ENCODE measurements at regions of chr9 and their contacts with region 1.

Region 1: DNA sequence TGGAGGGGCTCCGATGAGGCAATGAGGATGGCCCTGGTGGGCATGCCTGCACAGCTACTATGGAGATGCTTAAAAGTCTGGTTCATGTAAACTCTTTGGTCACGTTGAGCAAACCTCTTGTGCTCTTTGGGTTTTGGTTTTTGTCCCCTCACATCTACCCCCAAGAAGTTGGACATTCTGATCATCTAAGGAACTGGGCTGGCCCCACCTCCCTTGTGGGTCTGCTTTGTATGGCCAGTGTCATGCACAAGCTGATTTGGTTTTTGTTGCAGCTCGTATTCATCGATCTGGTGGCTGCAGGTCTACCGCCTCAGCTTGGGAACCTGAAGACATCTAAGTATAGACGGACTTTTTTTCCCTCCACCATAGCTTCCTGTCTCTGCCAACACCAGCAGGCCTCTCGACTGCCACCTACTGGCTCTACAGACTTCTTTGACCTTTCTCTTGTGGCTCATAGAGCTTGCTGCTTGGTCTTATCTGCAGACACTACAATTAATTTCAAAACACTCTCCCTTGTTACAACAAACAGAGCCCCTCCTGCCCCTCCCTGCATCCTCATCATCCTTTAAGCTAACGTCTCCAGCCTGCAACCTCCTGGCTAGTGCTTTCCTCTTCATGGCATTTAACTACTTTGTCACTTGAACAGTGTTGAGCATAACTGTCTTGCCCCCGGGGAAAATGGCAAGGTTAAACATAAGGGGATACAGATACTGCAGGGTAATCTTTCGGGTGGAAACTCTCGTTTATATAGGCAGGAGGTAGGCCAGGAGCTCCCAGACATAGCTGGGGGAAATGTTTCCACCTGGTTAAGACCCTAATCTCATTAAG is 34.5 kb downstream of the TSTD2 start:
- DNase-seq: peak; percentile 80 to 82
- H3K4me3 ChIP-seq: no peak overlapping the region
- H3K4me3 Mint-ChIP-seq: no peak overlapping the region
- H3K27ac Mint-ChIP-seq: no peak overlapping the region
- H3K4me1 ChIP-seq: 0 out of 2 replicates have a peak, but pooled peaks cover 3% of the 10 kb centered on the region
- H3K4me1 Mint-ChIP-seq: peaks cover 8% of the 10 kb centered on the region
- H3K27me3 ChIP-seq: no peaks in the 10 kb centered on the region
- H3K27me3 Mint-ChIP-seq: no peaks in the 10 kb centered on the region
- CTCF ChIP-seq: peak; percentile 83 to 93

Region 2: DNA sequence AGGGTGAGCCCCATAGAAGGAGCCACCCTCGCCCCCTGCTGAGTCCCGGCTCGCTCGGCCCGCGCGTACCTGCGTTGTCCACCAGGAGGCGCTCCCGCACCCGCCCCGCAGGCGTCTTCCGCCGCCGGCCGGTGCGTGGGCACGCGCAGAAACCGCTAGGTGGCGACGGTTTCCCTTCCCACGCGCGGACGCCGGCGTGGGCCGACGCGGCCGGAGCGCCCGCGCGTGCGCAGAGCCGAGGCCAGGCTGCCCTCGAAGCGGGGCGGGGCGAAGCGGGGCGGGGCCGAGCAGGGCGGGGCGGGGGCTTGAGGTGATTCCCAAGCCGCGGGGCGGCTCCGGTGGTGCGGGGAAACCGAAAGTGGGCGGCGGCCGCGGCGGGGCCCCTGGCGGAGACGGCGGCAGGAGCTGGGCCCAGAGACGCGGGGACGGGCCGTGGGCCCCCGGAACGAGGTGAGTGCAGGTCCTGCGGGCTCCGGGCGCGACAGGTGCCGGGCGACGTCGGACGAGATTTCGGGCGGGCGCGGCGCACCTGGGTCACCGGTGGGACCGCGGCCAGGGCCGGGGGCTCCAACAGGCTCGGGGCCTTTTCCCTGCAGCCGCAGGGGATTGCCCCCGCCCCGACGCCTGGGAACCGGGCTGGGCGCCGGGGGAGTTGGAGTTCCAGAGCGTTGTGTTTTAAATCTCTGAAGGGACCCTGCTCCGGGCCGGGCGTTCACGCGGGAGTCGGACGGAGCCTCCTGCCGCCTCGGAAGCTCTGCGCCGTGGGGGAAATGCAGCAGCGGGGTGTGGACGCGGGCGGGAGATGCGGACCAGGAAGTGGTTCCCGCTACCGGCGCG is 186.7 kb before region 1 on chr9 and contains the start of gene TDRD7:
- CTCF ChIA-PET with region 1: interaction called, 4 read pairs
- POLR2A ChIA-PET with region 1: no interaction called
- intact Hi-C with region 1: loop called (anchors 2 kb)
- DNase-seq: peak; percentile 86 to 90
- H3K4me3 ChIP-seq: peak within 1 kb of the TSS; percentile 75
- H3K4me3 Mint-ChIP-seq: peak within 1 kb of the TSS; percentile 77
- H3K27ac Mint-ChIP-seq: peak within 1 kb of the TSS; percentile 89
- H3K4me1 ChIP-seq: peaks cover 14% of the 10 kb centered on the region
- H3K4me1 Mint-ChIP-seq: peaks cover 37% of the 10 kb centered on the region
- H3K27me3 ChIP-seq: no peaks in the 10 kb centered on the region
- H3K27me3 Mint-ChIP-seq: no peaks in the 10 kb centered on the region
- CTCF ChIP-seq: peak; percentile 95 to 99
- total RNA-seq, gene TDRD7: 22.0 and 23.0 TPM in 2 replicates

Region 3: GRCh38 chr9:97501177-97501971 is 97.3 kb before region 1 on chr9 and contains the start of gene TMOD1:
- CTCF ChIA-PET with region 1: interaction called, 29 read pairs
- POLR2A ChIA-PET with region 1: no interaction called
- intact Hi-C with region 1: loop called (anchors 10 kb)
- DNase-seq: peak; percentile 61 to 83
- H3K4me3 ChIP-seq: peak within 1 kb of the TSS; percentile 61
- H3K4me3 Mint-ChIP-seq: peak within 1 kb of the TSS; percentile 73
- H3K27ac Mint-ChIP-seq: no peak within 1 kb of the TSS
- H3K4me1 ChIP-seq: no peaks in the 10 kb centered on the region; the same call in 1 of the 2 replicates
- H3K4me1 Mint-ChIP-seq: no peaks in the 10 kb centered on the region
- H3K27me3 ChIP-seq: peaks cover 5% of the 10 kb centered on the region; the same call in 1 of the 2 replicates
- H3K27me3 Mint-ChIP-seq: peaks cover 19% of the 10 kb centered on the region
- CTCF ChIP-seq: peak in 1 of 2 experiments; percentile 30
- total RNA-seq, gene TMOD1: 1.00 and 1.1 TPM in 2 replicates

Region 4: GRCh38 chr9:97548819-97549540 is 49.7 kb before region 1 on chr9:
- CTCF ChIA-PET with region 1: no interaction called
- POLR2A ChIA-PET with region 1: no interaction called
- intact Hi-C with region 1: no loop called
- DNase-seq: no peak
- H3K4me3 ChIP-seq: no peak overlapping the region
- H3K4me3 Mint-ChIP-seq: no peak overlapping the region
- H3K27ac Mint-ChIP-seq: no peak overlapping the region
- H3K4me1 ChIP-seq: no peaks in the 10 kb centered on the region
- H3K4me1 Mint-ChIP-seq: no peaks in the 10 kb centered on the region
- H3K27me3 ChIP-seq: no peaks in the 10 kb centered on the region
- H3K27me3 Mint-ChIP-seq: peaks cover 3% of the 10 kb centered on the region
- CTCF ChIP-seq: no peak

Region 5: GRCh38 chr9:97615439-97616072 is 16.9 kb after region 1 on chr9:
- CTCF ChIA-PET with region 1: interaction called, 14 read pairs
- POLR2A ChIA-PET with region 1: no interaction called
- intact Hi-C with region 1: no loop called
- DNase-seq: peak; percentile 57 to 68
- H3K4me3 ChIP-seq: no peak overlapping the region
- H3K4me3 Mint-ChIP-seq: no peak overlapping the region
- H3K27ac Mint-ChIP-seq: no peak overlapping the region
- H3K4me1 ChIP-seq: no peaks in the 10 kb centered on the region
- H3K4me1 Mint-ChIP-seq: no peaks in the 10 kb centered on the region
- H3K27me3 ChIP-seq: no peaks in the 10 kb centered on the region
- H3K27me3 Mint-ChIP-seq: no peaks in the 10 kb centered on the region
- CTCF ChIP-seq: peak; percentile 74 to 79

Region 6: GRCh38 chr9:97625620-97626019 is 26.9 kb after region 1 on chr9:
- CTCF ChIA-PET with region 1: no interaction called
- POLR2A ChIA-PET with region 1: no interaction called
- intact Hi-C with region 1: no loop called
- DNase-seq: no peak
- H3K4me3 ChIP-seq: no peak overlapping the region
- H3K4me3 Mint-ChIP-seq: no peak overlapping the region
- H3K27ac Mint-ChIP-seq: no peak overlapping the region
- H3K4me1 ChIP-seq: no peaks in the 10 kb centered on the region
- H3K4me1 Mint-ChIP-seq: peaks cover 6% of the 10 kb centered on the region
- H3K27me3 ChIP-seq: no peaks in the 10 kb centered on the region; the same call in 1 of the 2 replicates
- H3K27me3 Mint-ChIP-seq: no peaks in the 10 kb centered on the region
- CTCF ChIP-seq: no peak

Measured in Caco-2 (cell line).